ENCODE measurements at regions of chr7 and their contacts with region 1.

Region 1: GRCh38 chr7:100632951-100633717 is 8.2 kb downstream of the TFR2 start:
- DNase-seq: peak; percentile 14
- ATAC-seq: peak; percentile 70
- H3K4me3 ChIP-seq: no peak overlapping the region
- H3K27ac ChIP-seq: no peak overlapping the region
- H3K4me1 ChIP-seq: no peaks in the 10 kb centered on the region
- H3K27me3 ChIP-seq: no peaks in the 10 kb centered on the region
- CTCF ChIP-seq: peak; percentile 33; the same call in 1 of the 2 replicates

Region 2: GRCh38 chr7:100545360-100546128 is 87.6 kb before region 1 on chr7:
- CTCF ChIA-PET with region 1: interaction called, 10 read pairs
- POLR2A ChIA-PET with region 1: no interaction called
- intact Hi-C with region 1: no loop called
- DNase-seq: peak; percentile 91
- ATAC-seq: peak; percentile 90
- H3K4me3 ChIP-seq: peak overlapping the region; percentile 46
- H3K27ac ChIP-seq: peak overlapping the region; percentile 83
- H3K4me1 ChIP-seq: peaks cover 46% of the 10 kb centered on the region
- H3K27me3 ChIP-seq: no peaks in the 10 kb centered on the region
- CTCF ChIP-seq: 0 out of 2 replicates have a peak, but pooled peaks have one; percentile 21

Region 3: GRCh38 chr7:100649826-100650547 is 16.9 kb after region 1 on chr7:
- CTCF ChIA-PET with region 1: no interaction called
- POLR2A ChIA-PET with region 1: interaction called, 11 read pairs
- intact Hi-C with region 1: no loop called
- DNase-seq: no peak
- ATAC-seq: no peak
- H3K4me3 ChIP-seq: no peak overlapping the region
- H3K27ac ChIP-seq: no peak overlapping the region
- H3K4me1 ChIP-seq: no peaks in the 10 kb centered on the region
- H3K27me3 ChIP-seq: no peaks in the 10 kb centered on the region
- CTCF ChIP-seq: no peak

Region 4: GRCh38 chr7:100655908-100656674 is 23.0 kb after region 1 on chr7 and contains the start of gene ACTL6B:
- CTCF ChIA-PET with region 1: interaction called, 16 read pairs
- POLR2A ChIA-PET with region 1: interaction called, 3 read pairs
- intact Hi-C with region 1: no loop called
- DNase-seq: no peak
- ATAC-seq: peak; percentile 18; the same call in 1 of the 2 replicates
- H3K4me3 ChIP-seq: no peak within 1 kb of the TSS
- H3K27ac ChIP-seq: no peak within 1 kb of the TSS
- H3K4me1 ChIP-seq: no peaks in the 10 kb centered on the region
- H3K27me3 ChIP-seq: no peaks in the 10 kb centered on the region
- CTCF ChIP-seq: no peak
- total RNA-seq, gene ACTL6B: not detected in 2 replicates

Measured in PC-3 (cell line).